Ovary (tissue), 10 donors: ENCODE measurements at regions of chr11 and their contacts with region 1.

Region 1: DNA sequence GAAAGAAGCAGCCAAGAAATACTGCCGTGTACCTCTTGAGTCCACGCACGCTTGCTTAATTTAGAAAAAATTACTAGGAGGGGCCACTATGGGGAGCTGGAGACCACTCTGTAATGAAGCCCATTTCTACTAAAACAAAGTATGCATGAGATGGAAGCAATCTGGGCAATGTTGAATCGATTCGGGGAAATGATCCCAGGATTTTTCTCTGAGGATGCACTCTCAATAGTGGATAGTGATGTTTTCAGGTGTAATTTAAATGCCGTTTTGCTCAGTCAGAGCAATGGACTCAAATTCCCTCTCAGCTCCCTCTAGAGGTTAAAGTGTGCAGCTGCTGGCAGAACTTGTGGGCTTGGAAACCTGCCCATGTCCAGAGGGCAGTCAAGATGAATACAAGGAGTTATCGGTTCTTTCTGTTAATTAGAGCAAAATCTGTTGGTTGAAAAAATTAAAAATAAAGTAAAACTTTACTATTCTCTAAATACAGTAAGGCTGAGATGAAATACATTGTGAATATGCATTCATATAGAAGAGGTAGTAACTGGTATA is 64.1 kb downstream of the ME3 start:
- DNase-seq: peak; percentile 75 to 85 (median 82)
- H3K4me3 ChIP-seq: no peak overlapping the region
- H3K27ac ChIP-seq: no peak overlapping the region
- H3K4me1 ChIP-seq: peaks cover 10% of the 10 kb centered on the region
- H3K27me3 ChIP-seq: no peaks in the 10 kb centered on the region
- CTCF ChIP-seq: peak; percentile 94 to 97 (median 94)
- EP300 ChIP-seq: no peak
- POLR2A ChIP-seq: no peak

Region 2: GRCh38 chr11:86440305-86440716 is 168.0 kb before region 1 on chr11:
- intact Hi-C with region 1: loop called in 1 of 4 experiments (anchors 10 kb)
- DNase-seq: peak in 1 of 5 donors; percentile 33
- H3K4me3 ChIP-seq: no peak overlapping the region
- H3K27ac ChIP-seq: no peak overlapping the region
- H3K4me1 ChIP-seq: no peaks in the 10 kb centered on the region
- H3K27me3 ChIP-seq: no peaks in the 10 kb centered on the region
- CTCF ChIP-seq: no peak
- EP300 ChIP-seq: no peak
- POLR2A ChIP-seq: no peak

Region 3: GRCh38 chr11:86663761-86664160 is 55.4 kb after region 1 on chr11:
- intact Hi-C with region 1: loop called in 1 of 4 experiments (anchors 2 kb)
- DNase-seq: no peak
- H3K4me3 ChIP-seq: no peak overlapping the region
- H3K27ac ChIP-seq: no peak overlapping the region
- H3K4me1 ChIP-seq: peaks cover 5% of the 10 kb centered on the region
- H3K27me3 ChIP-seq: no peaks in the 10 kb centered on the region
- CTCF ChIP-seq: no peak
- EP300 ChIP-seq: no peak
- POLR2A ChIP-seq: no peak

Region 4: DNA sequence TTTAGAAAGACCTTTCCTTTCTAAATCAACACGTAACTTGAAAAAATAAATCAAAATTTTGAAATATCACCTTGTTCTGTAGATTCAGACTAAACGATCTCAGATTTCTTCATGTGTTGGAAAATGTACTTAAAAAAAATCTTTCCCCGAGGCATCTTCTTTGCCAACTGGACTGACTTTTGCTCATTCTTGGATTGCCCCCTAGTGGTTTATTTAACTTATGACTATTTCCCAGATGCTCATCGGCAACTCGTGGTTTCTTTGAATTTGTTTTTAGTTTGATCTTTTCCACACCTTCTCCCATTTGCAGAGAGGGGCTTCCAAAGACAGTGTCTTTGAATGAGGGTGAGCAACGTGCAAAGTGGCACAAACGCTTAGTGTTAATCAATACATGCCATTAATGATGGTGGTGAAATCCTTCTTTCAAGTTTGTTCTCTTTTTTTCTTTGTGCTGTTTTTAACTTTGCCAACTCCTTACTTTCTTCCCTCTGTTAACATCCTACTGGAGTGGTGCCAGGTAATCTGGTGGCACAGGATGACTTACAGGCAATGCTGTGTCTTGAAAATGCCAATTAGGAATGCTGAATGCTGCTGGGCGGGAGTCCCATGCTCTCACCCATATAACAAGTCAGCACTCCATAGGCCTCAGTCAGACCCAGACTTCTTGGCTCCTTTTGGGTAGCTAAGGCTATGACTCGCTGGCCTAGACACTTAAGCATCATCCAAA is 210.3 kb after region 1 on chr11:
- intact Hi-C with region 1: loop called in 3 of 4 experiments (anchors 5 kb)
- DNase-seq: no peak
- H3K4me3 ChIP-seq: no peak overlapping the region
- H3K27ac ChIP-seq: no peak overlapping the region
- H3K4me1 ChIP-seq: peaks cover 1% of the 10 kb centered on the region
- H3K27me3 ChIP-seq: no peaks in the 10 kb centered on the region
- CTCF ChIP-seq: peak; percentile 37 to 89 (median 87)
- EP300 ChIP-seq: no peak
- POLR2A ChIP-seq: no peak

Region 5: DNA sequence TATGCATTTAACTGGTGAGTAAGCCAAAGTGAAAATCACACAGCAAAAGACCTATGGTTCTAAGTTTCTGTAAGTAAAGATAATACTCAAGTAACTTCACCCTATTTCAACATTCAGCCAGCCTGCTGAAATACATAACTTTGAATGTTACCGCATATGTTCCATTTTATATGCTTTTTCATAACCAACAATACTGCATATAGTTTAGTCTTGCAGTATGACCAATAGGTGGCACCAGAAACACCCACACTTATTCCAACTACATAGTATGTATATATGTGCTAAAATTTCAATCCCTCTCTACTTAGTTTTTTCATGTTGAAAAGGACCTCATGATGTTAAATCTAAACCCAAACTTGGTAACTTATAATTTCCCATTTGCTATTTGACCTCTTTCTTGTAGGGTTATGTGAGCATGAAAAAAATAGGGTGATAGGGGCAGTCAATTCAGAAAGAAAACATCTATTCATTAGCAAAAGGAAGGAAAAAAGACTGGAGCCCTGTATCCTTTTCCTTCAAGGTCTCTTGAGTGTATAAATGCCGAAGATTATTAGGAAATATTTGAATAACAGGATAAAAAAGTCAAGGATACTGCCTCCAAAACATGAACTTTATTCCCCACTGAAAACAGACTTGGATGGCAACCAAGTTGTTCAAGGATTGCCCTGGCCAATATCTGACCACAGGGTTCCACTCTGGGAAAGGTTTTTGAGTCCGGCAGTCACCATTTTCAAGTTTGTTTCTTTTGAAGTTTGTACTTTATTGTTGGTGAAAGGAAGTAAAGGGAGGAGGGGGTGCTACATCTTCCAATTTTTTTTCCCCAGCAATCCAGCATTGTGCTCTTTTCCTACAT is 370.7 kb after region 1 on chr11:
- intact Hi-C with region 1: no loop called
- DNase-seq: no peak
- H3K4me3 ChIP-seq: no peak overlapping the region
- H3K27ac ChIP-seq: peak overlapping the region in 1 of 2 donors; percentile 25
- H3K4me1 ChIP-seq: peaks cover 11% of the 10 kb centered on the region
- H3K27me3 ChIP-seq: no peaks in the 10 kb centered on the region
- CTCF ChIP-seq: no peak
- EP300 ChIP-seq: no peak
- POLR2A ChIP-seq: no peak